ENCODE measurements at regions of chr18 and their contacts with region 1.

Region 1: DNA sequence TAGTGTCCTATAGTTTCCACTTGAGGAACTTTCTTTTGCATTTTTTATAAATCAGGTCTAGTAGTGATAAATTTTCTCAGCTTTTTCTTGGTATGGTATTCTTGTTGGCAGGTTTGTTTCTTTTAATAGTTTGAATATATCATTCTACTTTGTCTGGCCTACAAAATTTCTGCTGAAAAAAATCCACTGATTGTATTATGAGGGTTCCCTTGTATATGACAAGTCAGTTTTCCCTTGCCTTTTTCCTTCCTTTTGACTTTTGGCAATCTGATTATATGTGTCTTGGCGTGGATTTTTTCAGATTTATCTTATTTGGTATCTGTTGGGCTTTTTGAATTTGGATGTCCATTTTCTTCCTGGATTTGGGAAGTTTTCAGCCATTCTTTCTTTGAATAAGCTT is 41.9 kb downstream of the MOCOS start:
- DNase-seq: no peak
- ATAC-seq: no peak
- H3K4me3 ChIP-seq: no peak overlapping the region
- H3K27ac ChIP-seq: no peak overlapping the region
- H3K4me1 ChIP-seq: no peaks in the 10 kb centered on the region
- H3K27me3 ChIP-seq: no peaks in the 10 kb centered on the region
- CTCF ChIP-seq: no peak
- POLR2A ChIP-seq: no peak
- RAD21 ChIP-seq: no peak

Region 2: GRCh38 chr18:36203360-36203895 is 25.8 kb before region 1 on chr18:
- CTCF ChIA-PET with region 1: no interaction called
- POLR2A ChIA-PET with region 1: interaction called, 10 read pairs
- dilution Hi-C with region 1: no loop called
- in situ Hi-C with region 1: no loop called
- intact Hi-C with region 1: no loop called
- DNase-seq: no peak
- ATAC-seq: no peak
- H3K4me3 ChIP-seq: no peak overlapping the region
- H3K27ac ChIP-seq: no peak overlapping the region
- H3K4me1 ChIP-seq: no peaks in the 10 kb centered on the region
- H3K27me3 ChIP-seq: no peaks in the 10 kb centered on the region
- CTCF ChIP-seq: no peak
- POLR2A ChIP-seq: no peak
- RAD21 ChIP-seq: no peak

Measured in IMR-90 (cell line).